MCF 10A (cell line): ENCODE measurements at regions of chr3 and their contacts with region 1.

Region 1: DNA sequence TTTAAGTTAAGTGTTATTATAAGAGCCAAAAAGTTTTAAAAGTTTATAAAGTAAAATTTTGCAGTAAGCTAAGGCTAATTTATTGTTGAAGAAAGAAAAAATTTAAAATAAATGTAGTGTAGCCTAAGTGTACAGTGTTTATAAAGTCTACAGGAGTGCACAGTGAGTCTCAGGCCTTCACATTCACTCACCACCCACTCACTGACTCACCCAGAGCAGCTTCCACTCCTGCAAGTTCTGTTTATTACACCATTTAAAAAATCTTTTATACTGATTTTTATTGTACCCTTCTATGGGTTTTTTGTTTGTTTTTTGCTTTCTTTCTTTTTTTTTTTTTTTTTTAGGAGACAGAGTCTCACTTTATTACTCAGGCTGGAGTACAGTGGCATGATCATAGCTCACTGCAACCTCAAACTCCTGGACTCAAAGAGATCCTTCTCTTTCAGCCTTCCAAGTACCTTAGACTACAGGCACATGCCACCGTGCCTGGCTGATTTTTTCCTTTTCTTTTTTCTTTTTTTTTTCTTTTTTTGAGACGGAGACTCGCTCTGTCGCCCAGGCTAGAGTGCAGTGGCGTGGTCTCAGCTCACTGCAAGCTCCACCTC is 25.9 kb downstream of the CSTA start:
- DNase-seq: peak; percentile 53
- H3K4me3 Mint-ChIP-seq: no peak overlapping the region
- H3K27ac Mint-ChIP-seq: peak overlapping the region; percentile 70
- H3K4me1 Mint-ChIP-seq: peaks cover 26% of the 10 kb centered on the region
- H3K27me3 Mint-ChIP-seq: no peaks in the 10 kb centered on the region
- CTCF ChIP-seq: no peak

Region 2: GRCh38 chr3:122322095-122323075 is 28.5 kb before region 1 on chr3:
- CTCF ChIA-PET with region 1: interaction called, 8 read pairs
- POLR2A ChIA-PET with region 1: interaction called, 26 read pairs
- intact Hi-C with region 1: no loop called
- DNase-seq: no peak
- H3K4me3 Mint-ChIP-seq: no peak overlapping the region
- H3K27ac Mint-ChIP-seq: no peak overlapping the region
- H3K4me1 Mint-ChIP-seq: peaks cover 10% of the 10 kb centered on the region
- H3K27me3 Mint-ChIP-seq: no peaks in the 10 kb centered on the region
- CTCF ChIP-seq: no peak

Region 3: DNA sequence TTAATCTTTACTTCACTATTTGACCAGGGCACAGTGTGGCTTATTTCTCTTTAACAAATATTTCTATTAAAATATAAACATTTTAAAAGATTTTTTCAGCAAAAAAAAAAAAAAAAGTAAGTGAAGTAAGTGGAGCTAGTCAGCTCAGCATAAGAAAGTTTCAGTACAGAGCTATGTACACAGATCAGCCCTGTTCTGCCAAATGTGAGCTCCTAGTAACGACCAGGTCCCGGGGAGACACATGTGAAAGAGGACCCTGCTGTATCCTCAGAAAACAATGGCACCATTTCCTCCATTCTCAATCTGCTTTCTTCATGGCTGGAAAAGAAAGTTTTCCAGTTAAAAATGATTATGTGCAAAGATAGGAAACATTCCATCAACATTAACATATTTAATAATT is 12.5 kb before region 1 on chr3:
- CTCF ChIA-PET with region 1: interaction called, 13 read pairs
- POLR2A ChIA-PET with region 1: interaction called, 9 read pairs
- intact Hi-C with region 1: no loop called
- DNase-seq: no peak
- H3K4me3 Mint-ChIP-seq: no peak overlapping the region
- H3K27ac Mint-ChIP-seq: no peak overlapping the region
- H3K4me1 Mint-ChIP-seq: peaks cover 5% of the 10 kb centered on the region
- H3K27me3 Mint-ChIP-seq: no peaks in the 10 kb centered on the region
- CTCF ChIP-seq: no peak

Region 4: GRCh38 chr3:122365073-122365472 is 14.2 kb after region 1 on chr3:
- CTCF ChIA-PET with region 1: interaction called, 6 read pairs
- POLR2A ChIA-PET with region 1: interaction called, 18 read pairs
- intact Hi-C with region 1: no loop called
- DNase-seq: no peak
- H3K4me3 Mint-ChIP-seq: no peak overlapping the region
- H3K27ac Mint-ChIP-seq: no peak overlapping the region
- H3K4me1 Mint-ChIP-seq: no peaks in the 10 kb centered on the region
- H3K27me3 Mint-ChIP-seq: no peaks in the 10 kb centered on the region
- CTCF ChIP-seq: no peak